ENCODE measurements at regions of chr10 and their contacts with region 1.

Region 1: GRCh38 chr10:58531084-58531695 is 18.5 kb downstream of the BICC1 start:
- DNase-seq: peak; percentile 59
- ATAC-seq: peak; percentile 85
- H3K4me3 ChIP-seq: no peak overlapping the region
- H3K27ac ChIP-seq: no peak overlapping the region
- H3K4me1 ChIP-seq: no peaks in the 10 kb centered on the region
- H3K27me3 ChIP-seq: no peaks in the 10 kb centered on the region; the same call in 1 of the 2 replicates
- CTCF ChIP-seq: peak; percentile 91

Region 2: DNA sequence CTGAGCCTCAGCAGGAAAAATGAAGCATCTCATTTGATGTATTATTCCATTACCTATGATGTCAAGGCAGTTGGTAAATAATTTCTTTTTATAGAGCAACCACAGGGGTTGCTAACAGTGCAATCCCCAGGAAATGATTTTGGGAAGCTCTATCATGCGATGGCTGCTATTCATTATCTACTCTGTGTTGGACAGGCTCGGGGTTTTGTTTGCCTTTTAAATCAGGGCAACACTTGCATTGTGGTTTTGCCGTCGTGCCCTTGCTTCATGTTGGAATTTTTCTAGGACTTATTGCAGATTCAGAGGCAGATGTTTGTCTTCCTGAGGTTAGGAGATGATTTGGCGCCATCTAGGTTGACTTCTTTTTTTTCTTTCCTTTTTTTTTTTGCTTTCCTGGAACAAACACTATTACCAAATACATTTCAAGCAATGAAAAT is 109.9 kb after region 1 on chr10:
- CTCF ChIA-PET with region 1: interaction called, 7 read pairs
- POLR2A ChIA-PET with region 1: no interaction called
- in situ Hi-C with region 1: no loop called
- intact Hi-C with region 1: loop called (anchors 5 kb)
- DNase-seq: no peak
- ATAC-seq: no peak
- H3K4me3 ChIP-seq: no peak overlapping the region
- H3K27ac ChIP-seq: no peak overlapping the region
- H3K4me1 ChIP-seq: no peaks in the 10 kb centered on the region
- H3K27me3 ChIP-seq: 0 out of 2 replicates have a peak, but pooled peaks cover 3% of the 10 kb centered on the region
- CTCF ChIP-seq: peak; percentile 47

Region 3: DNA sequence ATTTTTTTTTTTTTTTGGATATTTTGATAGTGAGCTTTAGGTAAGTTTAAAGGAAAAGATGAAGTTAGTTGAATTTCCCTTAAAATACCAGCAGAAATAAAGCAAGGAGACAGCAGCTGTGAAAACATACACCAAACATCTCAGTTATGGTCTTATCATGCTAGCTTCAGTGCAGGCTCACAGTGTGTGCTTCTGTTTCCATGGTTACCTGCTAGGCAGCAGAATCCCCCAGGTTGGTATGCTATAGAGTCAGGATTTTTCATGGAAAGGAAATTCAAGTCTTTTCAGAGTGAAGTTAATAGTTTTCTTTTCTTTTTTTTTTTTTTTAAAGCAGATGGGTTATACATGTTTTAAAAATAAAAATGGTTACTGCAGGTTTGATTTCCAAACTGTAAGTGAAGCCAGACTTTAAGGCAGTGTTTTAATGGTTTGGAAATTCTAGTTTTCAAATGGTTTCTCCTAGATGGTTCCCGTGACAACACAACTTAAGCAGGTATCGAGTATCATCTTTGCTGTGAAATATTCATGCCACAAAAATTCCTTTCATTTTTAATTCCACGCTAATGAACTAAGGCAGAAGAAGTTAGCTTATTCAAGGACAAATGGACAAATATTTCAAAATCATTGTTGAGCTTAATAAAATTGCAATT is 212.4 kb after region 1 on chr10:
- CTCF ChIA-PET with region 1: no interaction called
- POLR2A ChIA-PET with region 1: no interaction called
- in situ Hi-C with region 1: no loop called
- intact Hi-C with region 1: loop called (anchors 10 kb)
- DNase-seq: no peak
- ATAC-seq: no peak
- H3K4me3 ChIP-seq: no peak overlapping the region
- H3K27ac ChIP-seq: no peak overlapping the region
- H3K4me1 ChIP-seq: no peaks in the 10 kb centered on the region
- H3K27me3 ChIP-seq: no peaks in the 10 kb centered on the region
- CTCF ChIP-seq: no peak

Measured in Panc1 (cell line).